ENCODE measurements at regions of chr2 and their contacts with region 1.

Region 1: GRCh38 chr2:197378494-197379307 is 56.1 kb downstream of the SF3B1 start:
- DNase-seq: peak in 7 of 10 donors; percentile 25 to 73 (median 35)
- H3K4me3 ChIP-seq: peak overlapping the region in 56 of 59 donors; percentile 3 to 59 (median 38)
- H3K27ac ChIP-seq: no peak overlapping the region
- H3K27me3 ChIP-seq: no peaks in the 10 kb centered on the region
- CTCF ChIP-seq: peak; percentile 41 to 94 (median 85)

Region 2: GRCh38 chr2:196750982-196751635 is 627.6 kb before region 1 on chr2:
- intact Hi-C with region 1: loop called in 1 of 2 experiments (anchors 5 kb)
- DNase-seq: peak in 8 of 10 donors; percentile 16 to 60 (median 46)
- H3K4me3 ChIP-seq: no peak overlapping the region
- H3K27ac ChIP-seq: no peak overlapping the region
- H3K27me3 ChIP-seq: no peaks in the 10 kb centered on the region
- CTCF ChIP-seq: peak; percentile 39 to 82 (median 71)

Region 3: GRCh38 chr2:196926562-196927375 is 451.9 kb before region 1 on chr2 and contains the start of gene PGAP1:
- intact Hi-C with region 1: loop called in 1 of 2 experiments (anchors 10 kb)
- DNase-seq: peak; percentile 77 to 95 (median 86)
- H3K4me3 ChIP-seq: peak within 1 kb of the TSS; percentile 55 to 94 (median 85)
- H3K27ac ChIP-seq: peak within 1 kb of the TSS; percentile 71 to 98 (median 95)
- H3K27me3 ChIP-seq: no peaks in the 10 kb centered on the region
- CTCF ChIP-seq: peak in 14 of 56 donors; percentile 5 to 40 (median 20)
- total RNA-seq, gene PGAP1: 19.8 to 61.3 (median 33.4) TPM

Region 4: DNA sequence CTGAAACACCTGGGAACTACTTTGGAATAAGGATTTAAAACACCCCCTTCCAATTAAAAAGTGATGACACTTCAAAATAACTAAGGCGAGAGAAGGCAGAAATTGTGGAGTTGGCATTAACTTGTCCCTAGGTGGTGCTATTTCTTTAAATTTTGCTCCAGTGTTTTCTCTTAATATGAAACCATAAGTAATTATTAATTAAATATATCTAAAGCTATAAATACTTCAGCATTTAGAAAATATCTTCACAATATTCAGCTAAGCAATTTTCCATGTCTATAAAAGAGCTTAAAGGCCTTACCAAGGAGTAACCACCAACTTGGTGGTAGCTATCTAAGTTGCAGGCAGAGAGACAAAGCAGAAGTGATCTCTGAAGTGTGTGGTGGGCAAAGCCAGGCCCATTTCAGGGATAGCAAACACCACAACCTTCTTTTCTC is 265.4 kb before region 1 on chr2:
- intact Hi-C with region 1: loop called (anchors 2 to 5 kb)
- DNase-seq: no peak
- H3K4me3 ChIP-seq: no peak overlapping the region
- H3K27ac ChIP-seq: peak overlapping the region in 30 of 59 donors; percentile 0 to 74 (median 26)
- H3K27me3 ChIP-seq: no peaks in the 10 kb centered on the region
- CTCF ChIP-seq: peak; percentile 58 to 91 (median 77)

Region 5: GRCh38 chr2:197310271-197310985 is 68.3 kb before region 1 on chr2 and contains the start of gene ANKRD44:
- intact Hi-C with region 1: loop called in 1 of 2 experiments (anchors 5 kb)
- DNase-seq: peak; percentile 79 to 94 (median 90)
- H3K4me3 ChIP-seq: peak within 1 kb of the TSS; percentile 59 to 92 (median 78)
- H3K27ac ChIP-seq: peak within 1 kb of the TSS; percentile 57 to 95 (median 87)
- H3K27me3 ChIP-seq: no peaks in the 10 kb centered on the region
- CTCF ChIP-seq: peak in 49 of 56 donors; percentile 23 to 69 (median 51)
- total RNA-seq, gene ANKRD44: 20.2 to 68.1 (median 34.7) TPM